ENCODE measurements at regions of chr17 and their contacts with region 1.

Region 1: GRCh38 chr17:77054936-77055335 is 85.8 kb upstream of the SEC14L1 start:
- DNase-seq: no peak
- H3K4me3 ChIP-seq: no peak overlapping the region
- H3K27ac ChIP-seq: no peak overlapping the region
- H3K4me1 ChIP-seq: no peaks in the 10 kb centered on the region
- H3K27me3 ChIP-seq: peaks cover 0 to 11% (median 0%) of the 10 kb centered on the region in 5 experiments

Region 2: GRCh38 chr17:76868176-76868668 is 186.7 kb before region 1 on chr17 and contains the start of gene MGAT5B:
- CTCF ChIA-PET with region 1: interaction called, 18 read pairs
- POLR2A ChIA-PET with region 1: interaction called, 3 read pairs
- DNase-seq: peak; percentile 71 to 83 (median 82)
- H3K4me3 ChIP-seq: peak within 1 kb of the TSS in 5 of 7 experiments; percentile 30 to 65 (median 48)
- H3K27ac ChIP-seq: no peak within 1 kb of the TSS
- H3K4me1 ChIP-seq: peaks cover 0 to 36% (median 22%) of the 10 kb centered on the region in 4 experiments
- H3K27me3 ChIP-seq: peaks cover 0 to 42% (median 22%) of the 10 kb centered on the region in 5 experiments

Region 3: DNA sequence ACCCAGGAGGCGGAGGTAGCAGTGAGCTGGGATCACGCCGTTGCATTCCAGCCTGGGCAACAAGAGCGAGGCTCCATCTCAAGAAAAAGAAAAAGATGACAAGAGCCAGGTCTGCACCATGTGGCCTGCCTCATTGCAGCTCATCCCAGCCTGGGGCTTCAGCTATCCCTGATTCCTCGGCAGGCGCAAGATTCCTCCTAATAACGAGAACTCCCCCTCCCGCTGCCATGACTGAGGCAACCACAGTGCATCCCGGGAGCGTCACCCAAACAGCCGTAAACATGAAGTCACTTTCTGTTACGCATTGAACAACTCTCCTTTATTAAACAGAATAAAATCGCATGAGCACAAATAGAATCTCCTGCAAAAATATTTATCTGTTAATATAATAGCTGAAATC is 66.1 kb before region 1 on chr17:
- CTCF ChIA-PET with region 1: no interaction called
- POLR2A ChIA-PET with region 1: no interaction called
- DNase-seq: no peak
- H3K4me3 ChIP-seq: no peak overlapping the region
- H3K27ac ChIP-seq: no peak overlapping the region
- H3K4me1 ChIP-seq: peaks cover 0 to under 1% (median 0%) of the 10 kb centered on the region in 4 experiments
- H3K27me3 ChIP-seq: no peaks in the 10 kb centered on the region

Region 4: GRCh38 chr17:77011173-77012011 is 43.5 kb before region 1 on chr17:
- CTCF ChIA-PET with region 1: interaction called, 14 read pairs
- POLR2A ChIA-PET with region 1: no interaction called
- DNase-seq: peak; percentile 56 to 80 (median 72)
- H3K4me3 ChIP-seq: no peak overlapping the region
- H3K27ac ChIP-seq: no peak overlapping the region
- H3K4me1 ChIP-seq: no peaks in the 10 kb centered on the region
- H3K27me3 ChIP-seq: no peaks in the 10 kb centered on the region

Region 5: DNA sequence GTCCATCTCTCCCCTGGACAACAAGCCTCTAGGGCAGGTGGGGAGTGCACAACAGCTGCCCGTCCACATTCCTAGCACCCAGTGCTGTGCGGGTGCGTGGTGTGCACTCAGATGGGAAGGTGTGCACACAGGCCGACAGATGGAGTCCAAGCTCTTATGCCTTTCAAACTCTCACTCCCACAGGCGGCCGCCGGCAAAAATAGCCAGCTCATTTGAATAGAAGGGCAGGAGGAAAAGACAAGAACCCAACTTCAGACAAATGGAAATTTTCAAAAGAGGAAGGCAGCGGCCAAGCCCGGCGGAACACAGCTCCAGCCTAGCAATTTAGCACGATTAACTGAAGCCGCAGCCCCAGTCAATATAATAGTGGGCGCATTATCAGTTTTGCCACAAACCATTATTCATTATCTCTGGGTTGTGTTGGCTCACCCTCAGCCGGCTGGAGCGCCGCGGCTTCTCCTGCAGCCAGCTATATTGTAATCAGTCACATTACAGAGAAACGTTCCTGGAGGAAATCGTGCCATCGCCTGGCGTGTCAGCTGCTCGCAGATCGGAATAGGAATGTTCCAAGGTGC is 18.0 kb before region 1 on chr17:
- CTCF ChIA-PET with region 1: interaction called, 21 read pairs
- POLR2A ChIA-PET with region 1: interaction called, 5 read pairs
- DNase-seq: peak; percentile 43 to 68 (median 61)
- H3K4me3 ChIP-seq: peak overlapping the region in 4 of 7 experiments; percentile 16 to 52 (median 34)
- H3K27ac ChIP-seq: no peak overlapping the region
- H3K4me1 ChIP-seq: peaks cover 0 to 21% (median 14%) of the 10 kb centered on the region in 4 experiments
- H3K27me3 ChIP-seq: peaks cover 0 to 3% (median 0%) of the 10 kb centered on the region in 5 experiments

Region 6: DNA sequence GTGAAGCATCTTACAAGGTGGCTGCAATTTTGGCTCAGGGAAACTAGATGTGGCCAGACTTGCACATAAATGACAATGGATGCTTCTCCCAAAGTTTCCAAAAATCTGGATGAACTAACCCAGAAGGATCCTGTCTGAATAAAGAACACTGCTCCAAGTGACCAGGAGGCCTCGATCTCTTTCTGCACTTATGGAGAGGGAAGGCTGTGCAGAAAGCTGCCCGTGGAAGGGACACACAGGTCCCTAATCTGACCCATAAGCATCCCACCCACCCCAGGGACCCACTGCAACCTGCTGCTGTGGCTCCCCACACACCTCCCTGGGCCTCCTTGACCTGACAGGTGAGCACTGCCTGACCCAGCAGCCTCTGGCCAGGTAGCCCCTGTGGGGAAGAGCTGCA is 11.2 kb after region 1 on chr17:
- CTCF ChIA-PET with region 1: interaction called, 17 read pairs
- POLR2A ChIA-PET with region 1: interaction called, 3 read pairs
- DNase-seq: no peak
- H3K4me3 ChIP-seq: no peak overlapping the region
- H3K27ac ChIP-seq: no peak overlapping the region
- H3K4me1 ChIP-seq: peaks cover 0 to 2% (median 0%) of the 10 kb centered on the region in 4 experiments
- H3K27me3 ChIP-seq: peaks cover 0 to 4% (median 0%) of the 10 kb centered on the region in 5 experiments

Region 7: GRCh38 chr17:77131904-77132303 is 77.0 kb after region 1 on chr17:
- CTCF ChIA-PET with region 1: no interaction called
- POLR2A ChIA-PET with region 1: no interaction called
- DNase-seq: no peak
- H3K4me3 ChIP-seq: no peak overlapping the region
- H3K27ac ChIP-seq: no peak overlapping the region
- H3K4me1 ChIP-seq: peaks cover 0 to 12% (median 10%) of the 10 kb centered on the region in 4 experiments
- H3K27me3 ChIP-seq: no peaks in the 10 kb centered on the region